Activated CD4-positive, alpha-beta T cell treated with anti-CD3 and anti-CD28 coated beads for 36 hours (primary cell): ENCODE measurements at regions of chr6 and their contacts with region 1.

Region 1: DNA sequence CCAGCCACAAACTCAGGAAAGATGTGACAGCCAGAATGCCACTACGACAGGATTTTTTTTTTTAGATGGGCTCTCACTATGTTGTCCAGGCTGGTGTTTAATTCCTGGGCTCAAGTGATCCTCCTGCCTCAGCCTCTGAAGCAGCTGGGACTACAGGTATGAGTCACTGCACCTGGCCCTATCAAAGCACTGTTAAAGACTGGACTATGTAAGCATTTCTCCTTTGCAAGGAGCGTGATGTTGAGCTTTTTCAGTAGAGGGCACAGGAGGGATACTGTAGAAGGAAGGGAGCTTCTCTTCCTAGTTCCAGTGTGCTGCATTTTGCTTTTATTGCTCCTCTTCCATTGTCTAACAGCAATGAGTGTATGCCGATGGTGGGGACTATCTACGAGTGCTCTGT is 35.8 kb downstream of the ZBTB9 start:
- DNase-seq: no peak
- ATAC-seq: peak; percentile 42
- H3K4me3 Mint-ChIP-seq: no peak overlapping the region
- H3K27ac Mint-ChIP-seq: no peak overlapping the region
- H3K4me1 Mint-ChIP-seq: no peaks in the 10 kb centered on the region
- H3K27me3 Mint-ChIP-seq: peaks cover 4% of the 10 kb centered on the region

Region 2: DNA sequence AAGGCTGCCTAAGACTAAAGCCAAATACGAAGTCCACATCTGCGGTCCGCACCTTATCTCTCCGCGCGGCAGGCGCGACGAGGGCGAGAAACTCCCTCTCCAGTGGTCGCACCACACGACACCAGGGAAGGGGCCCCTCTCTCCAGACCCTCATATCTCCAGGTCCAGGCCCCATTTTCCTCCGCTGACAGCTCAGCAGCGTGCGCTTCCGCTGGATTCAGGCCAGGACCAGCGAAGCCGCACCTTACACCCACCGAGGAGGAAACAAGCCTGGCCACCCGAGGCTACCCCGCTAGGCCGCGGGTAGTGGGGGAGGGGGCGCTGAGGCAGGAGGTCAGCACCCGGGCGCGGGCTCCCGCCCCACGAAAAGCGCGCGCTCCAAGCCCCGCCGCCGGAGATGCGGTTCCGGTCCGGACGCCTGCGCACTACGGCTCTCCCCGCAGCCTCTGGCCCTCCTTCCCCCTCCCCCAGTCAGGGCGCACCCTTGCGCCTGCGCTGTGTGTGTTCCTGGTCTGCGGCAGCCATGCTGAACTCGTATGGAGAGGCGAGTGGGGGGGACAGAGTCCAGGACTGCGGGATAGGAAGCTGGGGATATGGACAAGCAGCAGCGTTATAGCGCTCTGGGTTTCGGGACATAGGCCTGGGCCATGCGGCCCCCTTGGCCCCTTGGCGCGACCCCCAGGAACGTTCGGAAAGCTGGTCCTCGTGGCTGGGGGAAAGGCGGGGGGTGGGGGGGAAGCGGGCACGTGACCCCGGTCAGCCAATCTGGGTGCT is 521.9 kb before region 1 on chr6 and contains the start of gene BRD2:
- CTCF ChIA-PET with region 1: no interaction called
- POLR2A ChIA-PET with region 1: no interaction called
- intact Hi-C with region 1: no loop called
- DNase-seq: peak; percentile 98
- ATAC-seq: peak; percentile 45
- H3K4me3 Mint-ChIP-seq: peak within 1 kb of the TSS; percentile 98
- H3K27ac Mint-ChIP-seq: peak within 1 kb of the TSS; percentile 97
- H3K4me1 Mint-ChIP-seq: peaks cover 32% of the 10 kb centered on the region
- H3K27me3 Mint-ChIP-seq: no peaks in the 10 kb centered on the region
- total RNA-seq, gene BRD2: 230 to 338 TPM

Region 3: GRCh38 chr6:33477864-33478263 is 12.3 kb before region 1 on chr6:
- CTCF ChIA-PET with region 1: no interaction called
- POLR2A ChIA-PET with region 1: no interaction called
- intact Hi-C with region 1: no loop called
- DNase-seq: no peak
- ATAC-seq: no peak
- H3K4me3 Mint-ChIP-seq: no peak overlapping the region
- H3K27ac Mint-ChIP-seq: no peak overlapping the region
- H3K4me1 Mint-ChIP-seq: no peaks in the 10 kb centered on the region
- H3K27me3 Mint-ChIP-seq: no peaks in the 10 kb centered on the region

Region 4: DNA sequence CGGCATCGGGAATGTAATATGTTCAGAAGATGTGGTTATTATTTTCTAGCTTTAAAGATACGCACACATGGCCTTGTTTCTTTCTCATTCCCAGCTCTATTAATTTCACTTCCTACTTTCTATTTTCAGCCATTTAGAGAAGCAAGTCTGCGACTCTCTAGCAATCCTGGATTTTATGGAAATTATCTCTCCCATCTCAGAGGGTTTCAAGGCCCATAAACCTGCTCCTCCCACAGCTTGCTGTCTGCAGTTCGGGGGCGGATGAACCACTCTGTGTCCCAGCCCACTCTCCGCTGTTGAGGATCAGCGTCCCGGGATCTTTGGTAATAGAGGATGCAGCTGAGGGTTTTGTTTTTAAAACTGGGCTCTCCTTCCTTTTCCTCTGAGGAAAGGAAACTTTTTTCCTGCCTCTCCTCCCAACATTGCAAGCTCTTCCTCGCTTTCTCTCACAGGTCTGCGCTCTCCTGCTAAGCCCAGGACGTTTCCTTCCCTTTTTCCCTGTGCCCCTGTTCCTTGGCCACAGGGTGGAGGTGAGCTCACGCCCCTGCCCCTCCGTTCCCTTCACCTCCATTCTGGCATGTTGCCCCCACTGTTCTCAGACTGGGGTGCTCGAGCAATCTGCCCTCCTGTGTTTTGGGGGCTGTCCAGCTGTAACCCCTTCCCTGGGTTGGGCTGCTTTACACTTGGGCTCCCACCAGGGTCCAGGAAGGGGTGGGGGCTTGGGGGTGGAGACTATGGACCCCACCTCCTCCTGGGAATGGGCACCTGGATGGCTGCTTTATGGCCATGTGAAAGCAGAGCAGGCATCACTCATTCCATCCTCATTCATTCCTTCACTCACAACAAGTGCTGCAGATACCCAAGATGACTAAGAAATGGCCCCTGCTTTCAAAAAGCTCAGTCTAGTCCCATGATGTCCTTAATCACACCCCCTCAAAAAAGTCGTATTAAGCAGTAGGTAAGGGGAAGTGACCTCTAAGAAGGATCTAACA is 19.0 kb after region 1 on chr6:
- CTCF ChIA-PET with region 1: no interaction called
- POLR2A ChIA-PET with region 1: no interaction called
- intact Hi-C with region 1: loop called in 1 of 2 experiments (anchors 1 kb)
- DNase-seq: no peak
- ATAC-seq: no peak
- H3K4me3 Mint-ChIP-seq: no peak overlapping the region
- H3K27ac Mint-ChIP-seq: no peak overlapping the region
- H3K4me1 Mint-ChIP-seq: peaks cover 7% of the 10 kb centered on the region
- H3K27me3 Mint-ChIP-seq: peaks cover 10% of the 10 kb centered on the region

Region 5: DNA sequence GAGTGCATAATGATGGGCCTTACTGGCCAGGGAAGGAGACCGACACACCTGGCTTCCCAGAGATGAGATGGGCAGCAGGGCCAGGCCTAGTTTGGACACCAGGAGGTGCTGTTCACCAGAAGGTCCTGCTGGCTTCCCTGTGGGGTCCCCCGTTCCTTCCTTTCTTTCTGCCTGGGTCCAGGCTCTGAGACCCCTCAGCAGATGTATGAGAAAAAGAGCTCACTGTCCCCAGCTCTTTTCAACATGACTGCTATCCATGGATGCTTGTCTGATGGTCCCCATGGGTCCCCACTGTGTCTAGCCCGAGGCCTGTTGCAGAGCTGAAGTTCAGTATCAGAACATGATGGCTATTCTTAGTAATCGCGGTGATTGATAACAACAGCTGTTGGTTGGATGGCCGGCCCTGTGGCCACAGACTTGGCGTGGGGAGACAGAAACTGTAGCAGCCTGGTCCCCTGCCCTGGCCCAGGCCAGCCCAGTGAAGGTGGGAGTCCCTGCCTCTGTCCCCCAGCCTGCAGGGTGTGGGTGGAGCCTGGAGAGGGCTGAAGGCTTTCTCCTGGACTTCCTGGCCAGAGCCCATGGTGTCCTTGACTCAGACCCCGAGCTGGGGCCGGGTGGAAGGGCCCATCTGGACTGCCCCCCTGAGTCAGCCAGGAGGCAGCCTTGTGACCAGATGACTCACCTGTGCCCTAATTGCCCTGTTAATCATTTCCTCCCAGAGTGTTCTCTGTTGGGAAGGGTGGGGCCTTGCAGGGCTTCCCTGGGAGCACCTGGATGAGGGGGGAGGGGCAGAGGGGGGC is 99.7 kb after region 1 on chr6:
- CTCF ChIA-PET with region 1: no interaction called
- POLR2A ChIA-PET with region 1: no interaction called
- intact Hi-C with region 1: no loop called
- DNase-seq: peak; percentile 71
- ATAC-seq: peak; percentile 37
- H3K4me3 Mint-ChIP-seq: no peak overlapping the region
- H3K27ac Mint-ChIP-seq: no peak overlapping the region
- H3K4me1 Mint-ChIP-seq: peaks cover 36% of the 10 kb centered on the region
- H3K27me3 Mint-ChIP-seq: no peaks in the 10 kb centered on the region